HAP-1 (cell line): ENCODE measurements at regions of chr6 and their contacts with region 1.

Region 1: GRCh38 chr6:52284460-52285176 is at the start of gene MCM3:
- DNase-seq: peak; percentile 97 to 99
- H3K4me3 ChIP-seq: peak within 1 kb of the TSS; percentile 68
- H3K4me1 ChIP-seq: peaks cover 9% of the 10 kb centered on the region
- H3K27me3 ChIP-seq: no peaks in the 10 kb centered on the region

Region 2: DNA sequence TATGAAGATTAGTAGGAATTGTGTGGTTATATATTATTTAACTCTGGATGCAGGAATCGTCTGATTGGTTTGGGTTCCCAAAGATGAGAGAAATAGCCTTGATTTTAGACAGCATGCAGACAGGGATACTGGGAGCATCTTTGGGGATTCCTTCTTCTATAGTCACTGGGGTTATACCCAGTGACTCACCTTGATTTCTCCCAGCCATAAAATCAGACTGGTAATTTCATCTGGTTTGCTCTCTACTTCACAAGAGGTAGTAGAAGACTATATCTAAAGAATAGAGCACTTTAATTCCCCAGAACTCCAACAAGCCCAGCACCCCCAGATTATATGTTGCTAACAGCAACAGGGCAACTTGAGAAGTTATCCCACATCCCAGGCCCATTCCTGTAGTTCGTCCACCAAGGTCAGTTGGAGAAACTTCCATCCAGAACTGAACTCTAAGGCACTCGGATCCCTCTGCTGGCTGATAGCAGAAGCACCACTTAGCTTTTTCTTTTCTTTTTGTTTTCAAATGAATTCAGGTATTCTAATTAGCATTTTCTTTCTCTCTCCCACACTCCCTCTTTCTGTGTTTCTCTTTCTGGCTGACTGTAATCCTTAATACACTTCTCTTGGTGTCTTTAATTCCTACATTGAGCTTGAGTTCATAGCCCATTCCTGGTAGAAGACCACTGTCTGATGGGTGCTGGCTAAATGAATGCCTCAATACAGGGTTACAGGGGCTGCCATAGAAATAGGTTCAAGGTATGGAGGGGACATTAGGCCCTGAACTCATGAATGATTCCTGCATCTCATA is 115.1 kb after region 1 on chr6:
- in situ Hi-C with region 1: loop called (anchors 5 kb)
- DNase-seq: peak; percentile 59 to 80
- H3K4me3 ChIP-seq: no peak overlapping the region
- H3K4me1 ChIP-seq: peaks cover 7% of the 10 kb centered on the region
- H3K27me3 ChIP-seq: no peaks in the 10 kb centered on the region

Region 3: DNA sequence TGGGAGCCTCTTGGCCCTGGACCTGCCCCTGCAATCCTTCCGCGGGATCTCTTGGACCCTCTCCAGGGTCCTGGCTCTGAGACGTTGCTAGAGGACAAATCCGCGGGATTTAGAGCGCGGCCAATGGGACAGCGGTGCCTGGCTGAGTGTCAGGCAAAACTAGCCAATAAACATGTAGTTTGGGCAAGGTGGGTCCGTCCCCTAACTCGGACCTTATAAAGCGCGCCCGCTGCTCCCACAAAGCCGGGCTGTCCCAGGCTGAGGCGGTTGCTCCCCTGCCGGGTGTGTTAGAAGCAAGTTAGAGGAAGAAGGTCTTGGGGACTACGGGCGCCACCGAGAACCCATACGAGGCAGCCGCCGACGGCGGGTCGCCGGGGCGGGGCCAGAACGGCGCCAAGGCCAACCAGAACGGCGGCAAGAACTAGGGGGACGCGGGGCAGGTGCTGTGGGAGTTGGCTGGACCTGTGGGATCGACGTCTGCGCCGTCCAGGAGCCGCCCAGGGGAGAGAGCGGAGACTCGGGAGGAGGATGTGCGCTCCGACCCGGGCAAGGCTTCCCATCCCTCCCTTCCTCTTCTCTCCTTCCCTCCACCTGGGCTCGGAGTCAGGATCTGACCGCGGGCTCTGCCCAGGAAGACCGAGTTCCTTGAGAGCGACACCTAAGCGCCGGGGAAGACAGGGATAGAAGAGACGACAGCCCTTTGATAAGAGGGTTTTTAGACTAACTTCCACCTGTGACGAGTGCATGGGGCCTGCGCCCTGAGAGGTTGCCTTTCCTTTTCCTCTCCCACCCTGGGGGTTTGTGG is 379.8 kb after region 1 on chr6:
- in situ Hi-C with region 1: loop called (anchors 25 kb)
- DNase-seq: peak; percentile 90 to 95
- H3K4me3 ChIP-seq: peak overlapping the region; percentile 52
- H3K4me1 ChIP-seq: peaks cover 10% of the 10 kb centered on the region
- H3K27me3 ChIP-seq: no peaks in the 10 kb centered on the region